ENCODE measurements at regions of chr18 and their contacts with region 1.

Region 1: DNA sequence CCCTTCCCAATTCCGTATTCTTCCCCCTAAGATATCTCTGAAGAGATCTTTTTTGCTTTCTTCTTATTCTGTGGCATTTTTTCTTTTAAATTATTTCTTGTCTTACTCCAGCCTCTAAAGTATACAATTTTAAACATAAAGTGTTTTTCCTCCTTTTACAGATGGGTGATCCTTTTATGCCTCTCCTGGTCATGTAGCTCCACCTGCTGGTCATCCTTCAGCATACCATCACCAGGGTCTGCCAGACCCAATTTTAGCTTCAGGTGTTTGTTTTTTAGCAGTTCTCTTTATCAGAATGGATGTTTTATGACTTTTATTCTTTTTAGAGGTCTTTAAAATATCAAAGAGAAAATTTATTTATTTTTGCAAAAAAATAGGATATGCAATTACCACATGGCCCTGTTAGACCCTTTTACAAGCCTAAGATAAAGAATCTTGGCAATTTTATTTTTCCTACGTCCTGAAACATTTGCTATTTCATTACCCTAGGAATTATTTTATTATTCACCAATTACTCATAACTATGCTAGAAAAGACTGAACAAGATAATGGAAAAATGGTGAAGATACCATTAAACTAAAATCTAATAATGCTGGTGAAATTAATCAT is 55.5 kb downstream of the PIGN start:
- DNase-seq: peak; percentile 76
- ATAC-seq: peak; percentile 92
- H3K4me3 ChIP-seq: no peak overlapping the region
- H3K27ac ChIP-seq: no peak overlapping the region
- H3K4me1 ChIP-seq: peaks cover 2% of the 10 kb centered on the region
- H3K27me3 ChIP-seq: no peaks in the 10 kb centered on the region
- CTCF ChIP-seq: peak; percentile 98
- POLR2A ChIP-seq: peak; percentile 64; the same call in 1 of the 2 replicates
- RAD21 ChIP-seq: peak; percentile 99

Region 2: DNA sequence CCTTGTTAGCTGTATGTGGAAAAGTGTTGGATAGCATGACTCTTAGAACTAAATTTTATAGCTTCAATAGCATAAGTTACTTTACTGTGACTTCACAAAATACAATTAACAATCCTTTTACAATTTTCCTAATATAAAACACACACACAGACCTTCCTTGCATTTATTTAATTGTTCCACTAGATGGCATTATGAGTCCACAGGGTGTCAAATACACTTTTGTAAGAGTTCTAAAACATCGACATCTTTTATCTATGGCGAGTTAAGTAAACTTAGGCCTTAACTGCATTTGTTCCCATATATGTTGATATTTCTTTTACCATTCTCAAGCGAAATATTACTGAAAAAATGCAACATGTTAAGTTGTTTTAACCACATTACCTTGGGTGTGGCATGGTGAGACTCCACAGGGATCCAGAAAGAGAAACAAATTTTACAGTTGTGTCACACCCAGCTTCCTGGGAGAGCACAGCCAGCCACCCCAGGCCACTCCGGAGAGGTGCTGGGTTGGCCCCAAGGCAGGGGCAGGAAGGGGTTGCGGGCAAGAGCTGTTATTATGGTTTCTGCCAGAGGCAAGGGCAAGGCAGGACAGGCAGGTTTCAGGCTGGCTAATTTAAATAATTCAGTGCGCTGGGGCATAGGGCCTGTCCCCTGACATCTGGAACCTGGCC is 1446.4 kb before region 1 on chr18:
- CTCF ChIA-PET with region 1: no interaction called
- POLR2A ChIA-PET with region 1: no interaction called
- dilution Hi-C with region 1: no loop called
- in situ Hi-C with region 1: no loop called
- intact Hi-C with region 1: loop called (anchors 1 kb)
- DNase-seq: peak; percentile 17
- ATAC-seq: no peak
- H3K4me3 ChIP-seq: no peak overlapping the region
- H3K27ac ChIP-seq: no peak overlapping the region
- H3K4me1 ChIP-seq: no peaks in the 10 kb centered on the region
- H3K27me3 ChIP-seq: no peaks in the 10 kb centered on the region
- CTCF ChIP-seq: peak; percentile 46
- POLR2A ChIP-seq: no peak
- RAD21 ChIP-seq: peak; percentile 43

Region 3: DNA sequence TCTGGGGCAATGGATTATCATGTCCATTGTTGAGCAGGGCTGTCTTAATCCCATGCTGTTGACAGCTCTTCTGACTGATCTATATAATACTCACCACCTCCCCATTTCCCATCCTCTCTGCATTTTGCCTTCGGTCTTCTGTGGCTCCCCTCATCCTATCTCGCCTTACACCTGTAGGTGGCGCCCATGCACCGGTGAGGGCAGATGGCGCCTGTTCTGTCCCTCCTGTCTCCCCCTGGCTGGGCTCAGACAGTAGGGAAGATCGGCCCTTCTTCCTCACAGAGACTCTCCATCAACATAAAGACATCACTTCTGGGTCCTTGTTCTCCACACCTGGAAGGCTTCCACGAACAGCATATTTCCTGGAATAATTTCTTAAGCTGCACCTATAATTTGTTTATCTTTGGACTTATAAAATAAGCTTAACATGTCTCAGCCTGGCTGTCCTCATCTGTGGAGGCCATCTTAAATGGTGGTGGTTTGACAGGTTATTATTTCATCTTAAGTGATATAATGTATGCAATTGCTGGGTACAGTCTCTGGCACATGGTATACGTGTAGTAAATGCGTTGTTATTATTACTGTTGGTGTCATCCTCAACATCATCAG is 809.0 kb before region 1 on chr18:
- CTCF ChIA-PET with region 1: interaction called, 5 read pairs
- POLR2A ChIA-PET with region 1: no interaction called
- dilution Hi-C with region 1: no loop called
- in situ Hi-C with region 1: loop called (anchors 10 kb)
- intact Hi-C with region 1: loop called (anchors 1 kb)
- DNase-seq: peak; percentile 33
- ATAC-seq: peak; percentile 96
- H3K4me3 ChIP-seq: no peak overlapping the region
- H3K27ac ChIP-seq: no peak overlapping the region
- H3K4me1 ChIP-seq: no peaks in the 10 kb centered on the region
- H3K27me3 ChIP-seq: no peaks in the 10 kb centered on the region
- CTCF ChIP-seq: peak; percentile 91
- POLR2A ChIP-seq: no peak
- RAD21 ChIP-seq: peak; percentile 91

Region 4: DNA sequence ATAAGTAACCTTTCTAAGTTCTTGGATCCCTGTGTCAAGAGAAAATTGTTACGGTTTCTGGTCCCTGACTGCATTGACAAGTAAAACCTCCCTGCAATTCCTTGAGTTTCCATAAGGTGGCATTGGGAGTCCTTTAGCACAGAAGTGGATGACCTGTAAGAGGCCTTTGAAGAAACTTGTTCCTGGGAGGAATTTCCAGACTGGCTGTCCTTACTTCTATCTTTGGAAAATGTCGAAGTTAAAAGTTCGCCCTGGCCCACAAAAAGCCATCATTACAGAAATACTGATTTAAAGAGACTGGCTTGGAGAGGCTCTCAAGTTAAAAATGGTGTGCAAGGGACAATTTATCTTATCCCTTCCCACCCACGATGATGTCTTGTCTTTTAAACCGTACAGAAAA is 579.8 kb before region 1 on chr18:
- CTCF ChIA-PET with region 1: interaction called, 3 read pairs
- POLR2A ChIA-PET with region 1: no interaction called
- dilution Hi-C with region 1: no loop called
- in situ Hi-C with region 1: loop called (anchors 5 kb)
- intact Hi-C with region 1: loop called (anchors 1 kb)
- DNase-seq: peak; percentile 88
- ATAC-seq: peak; percentile 98
- H3K4me3 ChIP-seq: no peak overlapping the region
- H3K27ac ChIP-seq: no peak overlapping the region
- H3K4me1 ChIP-seq: no peaks in the 10 kb centered on the region
- H3K27me3 ChIP-seq: no peaks in the 10 kb centered on the region
- CTCF ChIP-seq: peak; percentile 86
- POLR2A ChIP-seq: no peak
- RAD21 ChIP-seq: peak; percentile 88

Region 5: DNA sequence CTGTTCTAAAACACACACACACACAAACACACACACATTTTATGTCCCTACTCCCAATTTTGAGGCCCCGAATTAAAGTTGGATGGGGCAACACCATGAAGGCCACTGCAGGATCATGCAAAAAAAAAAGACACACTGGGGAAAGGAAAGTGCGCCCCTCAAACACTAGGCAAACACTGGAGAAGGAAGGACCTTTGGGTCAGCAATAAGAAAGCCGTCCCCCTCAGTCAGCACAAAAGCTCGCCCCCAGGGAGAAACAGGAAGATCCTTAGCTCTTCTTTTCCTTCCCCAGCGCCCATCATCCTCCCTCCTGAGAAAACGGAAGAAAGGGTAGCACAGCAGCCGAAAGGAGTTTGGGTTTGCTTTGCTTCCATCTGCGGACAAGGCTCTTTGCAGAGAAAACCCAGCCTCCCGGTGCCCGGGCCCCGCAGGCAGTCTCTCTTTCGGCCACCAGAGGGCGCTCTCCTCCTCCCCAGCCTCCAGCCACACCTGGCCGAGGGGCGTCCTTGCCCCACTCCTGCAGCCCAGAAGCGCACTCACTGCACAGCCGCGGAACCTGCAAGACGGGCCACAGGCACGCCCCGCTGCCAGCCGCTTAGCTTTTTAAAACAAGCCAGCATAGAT is 549.7 kb before region 1 on chr18:
- CTCF ChIA-PET with region 1: interaction called, 5 read pairs
- POLR2A ChIA-PET with region 1: no interaction called
- dilution Hi-C with region 1: no loop called
- in situ Hi-C with region 1: loop called (anchors 10 kb)
- intact Hi-C with region 1: loop called (anchors 1 kb)
- DNase-seq: peak; percentile 47
- ATAC-seq: peak; percentile 97
- H3K4me3 ChIP-seq: peak overlapping the region; percentile 45
- H3K27ac ChIP-seq: peak overlapping the region; percentile 57; the same call in 1 of the 2 replicates
- H3K4me1 ChIP-seq: peaks cover 4% of the 10 kb centered on the region
- H3K27me3 ChIP-seq: no peaks in the 10 kb centered on the region
- CTCF ChIP-seq: peak; percentile 88
- POLR2A ChIP-seq: no peak
- RAD21 ChIP-seq: peak; percentile 84

Region 6: GRCh38 chr18:61893971-61894750 is 237.2 kb before region 1 on chr18:
- CTCF ChIA-PET with region 1: interaction called, 3 read pairs
- POLR2A ChIA-PET with region 1: no interaction called
- dilution Hi-C with region 1: no loop called
- in situ Hi-C with region 1: loop called (anchors 5 kb)
- intact Hi-C with region 1: loop called (anchors 2 kb)
- DNase-seq: peak; percentile 64
- ATAC-seq: peak; percentile 93
- H3K4me3 ChIP-seq: peak overlapping the region; percentile 95
- H3K27ac ChIP-seq: peak overlapping the region; percentile 74
- H3K4me1 ChIP-seq: peaks cover 7% of the 10 kb centered on the region
- H3K27me3 ChIP-seq: no peaks in the 10 kb centered on the region
- CTCF ChIP-seq: peak; percentile 54
- POLR2A ChIP-seq: peak; percentile 76
- RAD21 ChIP-seq: peak; percentile 60

Region 7: GRCh38 chr18:61992285-61992684 is 139.1 kb before region 1 on chr18:
- CTCF ChIA-PET with region 1: interaction called, 4 read pairs
- POLR2A ChIA-PET with region 1: no interaction called
- dilution Hi-C with region 1: no loop called
- in situ Hi-C with region 1: no loop called
- intact Hi-C with region 1: loop called (anchors 5 kb)
- DNase-seq: peak; percentile 82
- ATAC-seq: peak; percentile 73
- H3K4me3 ChIP-seq: no peak overlapping the region
- H3K27ac ChIP-seq: peak overlapping the region; percentile 87
- H3K4me1 ChIP-seq: peaks cover 25% of the 10 kb centered on the region
- H3K27me3 ChIP-seq: no peaks in the 10 kb centered on the region
- CTCF ChIP-seq: no peak
- POLR2A ChIP-seq: no peak
- RAD21 ChIP-seq: no peak

Region 8: DNA sequence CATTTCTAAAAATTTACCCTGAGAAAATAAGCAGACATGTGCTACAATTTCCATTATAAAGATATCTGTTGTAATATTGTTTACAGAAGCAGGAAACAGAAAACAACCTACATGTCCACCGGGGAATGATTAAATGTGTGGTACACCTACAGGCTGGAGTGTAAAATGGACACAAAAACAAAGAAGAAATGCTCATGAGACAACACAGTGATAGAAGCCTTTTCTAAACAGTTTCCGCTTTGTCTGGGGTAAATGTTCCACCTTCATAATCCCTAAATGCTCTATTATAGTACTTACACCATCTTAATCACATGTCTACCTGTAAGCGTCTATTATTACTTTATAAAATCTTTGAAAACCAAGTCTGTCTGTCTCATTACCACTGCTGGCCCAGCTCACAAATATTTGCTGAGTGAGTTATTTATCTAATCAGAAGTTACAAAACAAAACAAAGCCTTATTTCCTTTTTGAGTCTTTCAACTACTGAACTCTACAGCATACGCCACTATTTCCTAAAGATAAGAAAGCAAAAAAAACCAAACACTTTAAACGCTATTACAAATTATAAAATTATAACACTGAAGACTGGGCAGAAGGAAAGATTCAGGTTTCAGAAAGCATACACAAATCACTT is 39.8 kb before region 1 on chr18:
- CTCF ChIA-PET with region 1: no interaction called
- POLR2A ChIA-PET with region 1: no interaction called
- dilution Hi-C with region 1: no loop called
- in situ Hi-C with region 1: no loop called
- intact Hi-C with region 1: no loop called
- DNase-seq: no peak
- ATAC-seq: no peak
- H3K4me3 ChIP-seq: no peak overlapping the region
- H3K27ac ChIP-seq: no peak overlapping the region
- H3K4me1 ChIP-seq: no peaks in the 10 kb centered on the region
- H3K27me3 ChIP-seq: no peaks in the 10 kb centered on the region
- CTCF ChIP-seq: no peak
- POLR2A ChIP-seq: no peak
- RAD21 ChIP-seq: no peak

Measured in IMR-90 (cell line).